Gastrocnemius medialis (tissue), 4 donors: ENCODE measurements at regions of chr12 and their contacts with region 1.

Region 1: DNA sequence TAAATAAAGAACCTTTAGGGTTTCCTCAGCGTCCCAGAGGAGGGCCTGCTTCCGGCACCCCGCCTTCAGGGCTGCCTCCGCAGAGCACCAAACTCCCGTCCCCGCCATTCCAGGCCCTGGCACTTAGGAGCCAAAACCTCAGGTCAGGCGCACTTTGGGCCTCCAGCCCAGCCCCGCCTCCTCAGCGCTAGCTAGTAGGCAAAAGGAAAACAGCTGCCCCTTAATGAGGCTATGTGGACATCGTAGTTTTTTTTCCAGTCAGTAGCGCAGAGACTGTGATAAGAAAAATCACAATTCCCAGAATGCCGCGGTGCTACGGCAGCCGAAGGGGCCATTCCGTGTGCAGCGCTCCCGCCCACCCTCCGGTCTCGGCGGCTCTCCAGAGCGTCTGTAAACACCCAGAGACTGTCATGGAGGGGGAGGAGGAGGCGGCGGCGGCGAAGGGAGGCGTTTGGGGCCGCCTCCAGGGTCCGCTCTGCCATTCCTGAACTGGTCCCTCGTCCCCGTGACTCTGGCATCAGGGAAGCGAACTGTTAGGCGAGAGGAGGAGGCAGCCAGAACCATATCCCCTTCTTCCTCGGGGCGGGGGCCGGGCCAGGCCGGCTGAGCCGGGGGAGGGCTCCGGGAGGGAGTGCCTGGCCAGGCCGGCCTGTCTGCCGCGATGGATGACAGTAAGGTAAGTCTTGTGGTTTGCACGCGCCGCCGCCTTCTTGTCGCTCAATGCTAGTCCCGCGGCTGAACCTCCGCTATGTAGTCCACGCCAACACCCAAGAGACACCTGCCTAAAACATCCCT is at the start of gene CREBL2:
- DNase-seq: peak; percentile 83 to 97
- ATAC-seq: peak; percentile 97 to 98
- H3K4me3 ChIP-seq: peak within 1 kb of the TSS; percentile 78 to 90 (median 82)
- H3K27ac ChIP-seq: peak within 1 kb of the TSS; percentile 95 to 98 (median 96)
- H3K4me1 ChIP-seq: peaks cover 18 to 24% of the 10 kb centered on the region in 2 donors
- H3K27me3 ChIP-seq: no peaks in the 10 kb centered on the region
- CTCF ChIP-seq: peak in 1 of 5 experiments; percentile 27
- POLR2A ChIP-seq: peak; percentile 61 to 80
- total RNA-seq, gene CREBL2: 6.3 to 13.6 (median 10.3) TPM

Region 2: GRCh38 chr12:12356886-12357718 is 254.6 kb before region 1 on chr12 and contains the start of gene BORCS5:
- in situ Hi-C with region 1: no loop called
- intact Hi-C with region 1: loop called (anchors 1 kb)
- DNase-seq: peak; percentile 92 to 96
- ATAC-seq: peak; percentile 95 to 96
- H3K4me3 ChIP-seq: peak within 1 kb of the TSS; percentile 79 to 97 (median 94)
- H3K27ac ChIP-seq: peak within 1 kb of the TSS; percentile 96 to 99 (median 98)
- H3K4me1 ChIP-seq: peaks cover 15 to 16% of the 10 kb centered on the region in 2 donors
- H3K27me3 ChIP-seq: no peaks in the 10 kb centered on the region
- CTCF ChIP-seq: peak in 3 of 5 experiments; percentile 8 to 29 (median 25)
- POLR2A ChIP-seq: peak; percentile 96 to 98
- total RNA-seq, gene BORCS5: 13.0 to 13.9 (median 13.4) TPM

Region 3: GRCh38 chr12:12505544-12506495 is 105.9 kb before region 1 on chr12:
- in situ Hi-C with region 1: no loop called
- intact Hi-C with region 1: loop called (anchors 5 kb)
- DNase-seq: no peak
- ATAC-seq: peak; percentile 45 to 65
- H3K4me3 ChIP-seq: peak overlapping the region; percentile 18 to 44 (median 30)
- H3K27ac ChIP-seq: peak overlapping the region; percentile 50 to 77 (median 72)
- H3K4me1 ChIP-seq: peaks cover 48 to 57% of the 10 kb centered on the region in 2 donors
- H3K27me3 ChIP-seq: no peaks in the 10 kb centered on the region
- CTCF ChIP-seq: no peak
- POLR2A ChIP-seq: no peak

Region 4: GRCh38 chr12:12716793-12717585 is 105.3 kb after region 1 on chr12 and contains the start of gene CDKN1B:
- in situ Hi-C with region 1: no loop called
- intact Hi-C with region 1: loop called (anchors 1 kb)
- DNase-seq: peak; percentile 86 to 91
- ATAC-seq: peak; percentile 84 to 86
- H3K4me3 ChIP-seq: peak within 1 kb of the TSS; percentile 72 to 99 (median 92)
- H3K27ac ChIP-seq: peak within 1 kb of the TSS; percentile 96 to 99 (median 98)
- H3K4me1 ChIP-seq: peaks cover 50 to 60% of the 10 kb centered on the region in 2 donors
- H3K27me3 ChIP-seq: no peaks in the 10 kb centered on the region
- CTCF ChIP-seq: peak in 1 of 5 experiments; percentile 5
- POLR2A ChIP-seq: peak; percentile 81 to 92
- total RNA-seq, gene CDKN1B: 43.6 to 76.4 (median 56.6) TPM